ENCODE measurements at regions of chr12 and their contacts with region 1.

Region 1: GRCh38 chr12:27237790-27238771 is 6.0 kb upstream of the STK38L start:
- DNase-seq: no peak
- H3K4me3 Mint-ChIP-seq: no peak overlapping the region
- H3K27ac Mint-ChIP-seq: peak overlapping the region; percentile 78
- H3K4me1 Mint-ChIP-seq: peaks cover 31% of the 10 kb centered on the region
- H3K27me3 Mint-ChIP-seq: no peaks in the 10 kb centered on the region

Region 2: GRCh38 chr12:27185234-27186021 is 52.7 kb before region 1 on chr12:
- intact Hi-C with region 1: loop called (anchors 2 kb)
- DNase-seq: peak; percentile 44
- H3K4me3 Mint-ChIP-seq: no peak overlapping the region
- H3K27ac Mint-ChIP-seq: peak overlapping the region; percentile 62
- H3K4me1 Mint-ChIP-seq: peaks cover 27% of the 10 kb centered on the region
- H3K27me3 Mint-ChIP-seq: no peaks in the 10 kb centered on the region

Region 3: GRCh38 chr12:27220057-27220987 is 17.8 kb before region 1 on chr12:
- intact Hi-C with region 1: loop called (anchors 2 kb)
- DNase-seq: no peak
- H3K4me3 Mint-ChIP-seq: no peak overlapping the region
- H3K27ac Mint-ChIP-seq: peak overlapping the region; percentile 34
- H3K4me1 Mint-ChIP-seq: peaks cover 15% of the 10 kb centered on the region
- H3K27me3 Mint-ChIP-seq: no peaks in the 10 kb centered on the region